ENCODE measurements at regions of chr17 and their contacts with region 1.

Region 1: GRCh38 chr17:76153640-76154039 is 12.6 kb upstream of the FOXJ1 start:
- DNase-seq: no peak
- ATAC-seq: peak; percentile 36; the same call in 1 of the 3 replicates
- H3K4me3 ChIP-seq: no peak overlapping the region
- H3K27ac ChIP-seq: no peak overlapping the region
- H3K4me1 ChIP-seq: no peaks in the 10 kb centered on the region
- H3K27me3 ChIP-seq: no peaks in the 10 kb centered on the region
- CTCF ChIP-seq: 0 out of 6 replicates have a peak, but pooled peaks of 1 of the 3 experiments have one; percentile 4
- EP300 ChIP-seq: no peak
- POLR2A ChIP-seq: no peak
- RAD21 ChIP-seq: no peak

Region 2: DNA sequence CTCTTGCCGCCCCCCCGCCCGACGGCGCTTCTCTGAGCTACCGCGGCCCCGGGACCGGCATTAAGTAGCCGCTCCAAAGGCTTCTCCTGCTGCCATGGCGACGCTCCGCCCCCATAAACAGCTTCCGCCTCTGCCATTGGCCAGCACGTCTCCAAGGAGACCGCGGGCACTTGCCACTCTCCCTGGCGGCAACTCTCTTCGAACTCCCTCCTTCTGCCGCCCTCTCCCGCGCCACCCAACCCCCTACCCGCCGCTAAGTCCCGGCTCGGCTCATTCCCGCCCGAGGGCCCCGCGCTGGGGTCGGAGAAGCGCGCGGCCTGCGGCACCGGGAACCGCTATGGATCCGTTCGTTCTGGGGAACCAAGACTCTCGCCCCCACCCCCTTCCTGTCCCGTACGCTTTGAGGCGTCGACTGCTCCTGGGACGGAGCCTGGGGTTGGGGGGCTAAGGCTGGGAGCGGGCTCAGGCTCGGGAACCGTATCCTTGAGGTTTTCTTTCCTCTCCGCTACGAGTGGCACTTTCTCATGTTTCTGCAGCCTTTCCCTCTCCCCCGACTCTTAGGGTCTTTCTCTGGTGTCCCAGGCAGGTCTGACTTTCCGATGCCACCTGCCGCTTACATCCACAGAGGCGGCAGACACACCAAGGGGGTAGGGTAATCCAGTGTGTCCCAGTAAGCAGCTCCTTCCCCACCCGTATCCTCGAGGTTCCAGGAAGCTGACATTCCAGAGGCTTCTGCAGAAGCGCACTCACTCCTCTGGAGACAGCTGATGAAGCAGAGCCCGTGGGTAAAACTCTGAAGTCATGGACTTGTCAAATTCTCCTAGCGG is 12.2 kb before region 1 on chr17 and contains the start of gene FOXJ1:
- CTCF ChIA-PET with region 1: no interaction called
- POLR2A ChIA-PET with region 1: interaction called, 28 read pairs
- in situ Hi-C with region 1: no loop called
- intact Hi-C with region 1: no loop called
- DNase-seq: peak; percentile 85 to 99 (median 98)
- ATAC-seq: peak; percentile 91
- H3K4me3 ChIP-seq: peak within 1 kb of the TSS; percentile 40; the same call in 1 of the 2 replicates
- H3K27ac ChIP-seq: no peak within 1 kb of the TSS
- H3K4me1 ChIP-seq: peaks cover 5 to 45% of the 10 kb centered on the region in 2 experiments; a peak in 3 of 5 replicates
- H3K27me3 ChIP-seq: peaks cover 32 to 46% of the 10 kb centered on the region in 2 experiments; a peak in 4 of 5 replicates
- CTCF ChIP-seq: no peak
- EP300 ChIP-seq: no peak
- POLR2A ChIP-seq: peak; percentile 46; the same call in 1 of the 2 replicates
- RAD21 ChIP-seq: no peak
- polyA plus RNA-seq, gene FOXJ1: not detected

Measured in K562 (cell line).